Activated naive CD4-positive, alpha-beta T cell treated with anti-CD3 and anti-CD28 coated beads for 36 hours (primary cell): ENCODE measurements at regions of chr2 and their contacts with region 1.

Region 1: GRCh38 chr2:113602869-113603466 is 24.1 kb upstream of the RABL2A start:
- DNase-seq: no peak
- H3K4me3 Mint-ChIP-seq: peak overlapping the region; percentile 93
- H3K27ac Mint-ChIP-seq: peak overlapping the region; percentile 84
- H3K4me1 Mint-ChIP-seq: peaks cover 9% of the 10 kb centered on the region
- H3K27me3 Mint-ChIP-seq: no peaks in the 10 kb centered on the region

Region 2: GRCh38 chr2:113700186-113700841 is 97.3 kb after region 1 on chr2:
- CTCF ChIA-PET with region 1: interaction called, 19 read pairs
- intact Hi-C with region 1: loop called (anchors 1 kb)
- DNase-seq: peak; percentile 71
- H3K4me3 Mint-ChIP-seq: peak overlapping the region; percentile 40
- H3K27ac Mint-ChIP-seq: peak overlapping the region; percentile 54
- H3K4me1 Mint-ChIP-seq: peaks cover 25% of the 10 kb centered on the region
- H3K27me3 Mint-ChIP-seq: no peaks in the 10 kb centered on the region

Region 3: GRCh38 chr2:114156366-114157056 is 553.5 kb after region 1 on chr2:
- CTCF ChIA-PET with region 1: no interaction called
- intact Hi-C with region 1: no loop called
- DNase-seq: no peak
- H3K4me3 Mint-ChIP-seq: no peak overlapping the region
- H3K27ac Mint-ChIP-seq: no peak overlapping the region
- H3K4me1 Mint-ChIP-seq: no peaks in the 10 kb centered on the region
- H3K27me3 Mint-ChIP-seq: peaks cover 3% of the 10 kb centered on the region